K562 (cell line): ENCODE measurements at regions of chr9 and their contacts with region 1.

Region 1: DNA sequence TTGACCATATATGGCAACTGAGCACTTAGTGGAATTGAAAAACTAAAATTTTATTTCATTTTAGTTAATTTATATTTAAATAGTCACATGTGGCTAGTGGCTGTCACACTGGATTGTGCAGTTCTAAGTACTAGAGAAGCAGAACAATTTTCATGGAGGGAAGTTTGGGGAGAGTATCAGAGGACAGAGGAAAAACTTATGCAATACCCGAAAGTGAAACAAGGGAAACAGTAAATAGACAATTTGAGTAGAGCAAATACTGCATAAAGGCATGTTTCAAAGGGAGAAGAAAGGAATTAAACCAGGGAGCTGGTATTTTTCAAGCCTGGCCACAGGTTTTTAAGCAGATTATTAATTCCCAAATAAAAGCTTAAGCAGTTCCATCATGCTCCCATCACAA is 590.5 kb upstream of the RORB start:
- DNase-seq: no peak
- ATAC-seq: no peak
- H3K4me3 ChIP-seq: no peak overlapping the region
- H3K27ac ChIP-seq: no peak overlapping the region
- H3K4me1 ChIP-seq: no peaks in the 10 kb centered on the region
- H3K27me3 ChIP-seq: no peaks in the 10 kb centered on the region
- CTCF ChIP-seq: no peak
- EP300 ChIP-seq: no peak
- POLR2A ChIP-seq: no peak
- RAD21 ChIP-seq: no peak

Region 2: DNA sequence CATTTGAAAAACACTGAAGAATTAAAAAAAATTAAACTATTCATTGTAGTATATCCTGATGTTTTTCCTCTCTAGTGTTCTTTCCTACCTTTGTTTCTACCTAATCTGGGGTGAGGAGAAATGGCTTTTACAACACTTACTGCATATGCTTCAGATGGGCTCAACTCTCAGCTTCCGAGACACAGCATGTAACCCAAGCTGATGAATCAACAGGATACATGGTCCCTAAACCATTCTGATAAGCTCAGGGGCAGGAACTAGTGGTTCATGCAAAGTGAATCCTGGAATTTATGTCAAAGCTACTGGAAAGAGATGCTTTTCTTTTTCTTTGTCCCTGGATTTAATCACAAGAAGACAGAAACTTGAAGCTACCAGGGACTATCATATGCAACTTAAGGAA is 82.0 kb before region 1 on chr9:
- CTCF ChIA-PET with region 1: no interaction called
- POLR2A ChIA-PET with region 1: no interaction called
- in situ Hi-C with region 1: no loop called
- intact Hi-C with region 1: loop called (anchors 10 kb)
- DNase-seq: no peak
- ATAC-seq: no peak
- H3K4me3 ChIP-seq: no peak overlapping the region
- H3K27ac ChIP-seq: no peak overlapping the region
- H3K4me1 ChIP-seq: no peaks in the 10 kb centered on the region
- H3K27me3 ChIP-seq: no peaks in the 10 kb centered on the region
- CTCF ChIP-seq: no peak
- EP300 ChIP-seq: no peak
- POLR2A ChIP-seq: no peak
- RAD21 ChIP-seq: no peak